CD4-positive, alpha-beta memory T cell (primary cell): ENCODE measurements at regions of chr10 and their contacts with region 1.

Region 1: GRCh38 chr10:73879296-73880173 is 5.2 kb upstream of the CAMK2G start:
- DNase-seq: peak; percentile 95 to 96 (median 96)
- H3K4me3 ChIP-seq: no peak overlapping the region
- H3K4me3 Mint-ChIP-seq: peak overlapping the region in 2 of 8 donors; percentile 12 to 52
- H3K27ac ChIP-seq: peak overlapping the region; percentile 50
- H3K27ac Mint-ChIP-seq: peak overlapping the region; percentile 56 to 99 (median 95)
- H3K4me1 ChIP-seq: peaks cover 37% of the 10 kb centered on the region
- H3K4me1 Mint-ChIP-seq: peaks cover 17 to 47% (median 31%) of the 10 kb centered on the region in 4 donors
- H3K27me3 ChIP-seq: no peaks in the 10 kb centered on the region
- H3K27me3 Mint-ChIP-seq: no peaks in the 10 kb centered on the region

Region 2: DNA sequence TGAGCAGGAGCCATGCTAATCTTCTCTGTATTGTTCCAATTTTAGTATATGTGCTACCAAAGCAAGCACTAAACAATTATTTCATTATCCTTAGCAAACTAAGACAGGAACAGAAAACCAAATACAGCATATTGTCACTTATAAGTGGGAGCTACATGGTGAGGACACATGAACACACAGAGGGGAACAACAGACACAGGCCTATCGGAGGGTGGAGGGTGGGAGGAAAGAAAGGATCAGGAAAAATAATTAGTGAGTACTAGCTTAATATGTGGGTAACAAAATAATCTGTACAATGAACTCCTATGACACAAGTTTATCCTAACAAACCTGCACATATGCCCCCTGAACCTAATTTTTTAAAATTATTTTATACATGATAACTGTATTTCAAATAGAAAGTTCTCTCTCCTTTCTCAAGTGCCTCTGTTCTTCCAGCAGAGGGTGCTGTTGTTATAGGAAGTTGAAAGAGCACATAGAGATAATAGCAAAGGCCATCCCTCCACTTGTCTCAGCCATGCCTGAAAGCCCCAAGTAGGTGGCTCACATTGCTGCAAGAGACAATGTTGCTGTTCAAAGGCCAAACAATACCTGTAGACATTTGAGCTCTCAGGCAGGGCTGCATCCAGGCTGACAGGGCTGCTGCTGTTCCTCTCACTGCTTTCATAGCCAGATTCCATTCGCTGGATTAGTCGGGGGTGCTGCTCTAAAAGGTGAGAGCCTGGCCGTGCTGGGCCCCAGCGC is 350.3 kb before region 1 on chr10:
- CTCF ChIA-PET with region 1: interaction called, 4 read pairs
- POLR2A ChIA-PET with region 1: no interaction called
- intact Hi-C with region 1: loop called (anchors 1 kb)
- DNase-seq: peak; percentile 57 to 77 (median 72)
- H3K4me3 ChIP-seq: no peak overlapping the region
- H3K4me3 Mint-ChIP-seq: no peak overlapping the region
- H3K27ac ChIP-seq: no peak overlapping the region
- H3K27ac Mint-ChIP-seq: no peak overlapping the region
- H3K4me1 ChIP-seq: no peaks in the 10 kb centered on the region
- H3K4me1 Mint-ChIP-seq: no peaks in the 10 kb centered on the region
- H3K27me3 ChIP-seq: no peaks in the 10 kb centered on the region
- H3K27me3 Mint-ChIP-seq: no peaks in the 10 kb centered on the region

Region 3: GRCh38 chr10:73798927-73799563 is 80.5 kb before region 1 on chr10:
- CTCF ChIA-PET with region 1: no interaction called
- POLR2A ChIA-PET with region 1: no interaction called
- intact Hi-C with region 1: no loop called
- DNase-seq: no peak
- H3K4me3 ChIP-seq: no peak overlapping the region
- H3K4me3 Mint-ChIP-seq: no peak overlapping the region
- H3K27ac ChIP-seq: no peak overlapping the region
- H3K27ac Mint-ChIP-seq: peak overlapping the region in 2 of 7 donors; percentile 46 to 63
- H3K4me1 ChIP-seq: no peaks in the 10 kb centered on the region
- H3K4me1 Mint-ChIP-seq: peaks cover 0 to 7% (median 0%) of the 10 kb centered on the region in 4 donors
- H3K27me3 ChIP-seq: no peaks in the 10 kb centered on the region
- H3K27me3 Mint-ChIP-seq: no peaks in the 10 kb centered on the region

Region 4: DNA sequence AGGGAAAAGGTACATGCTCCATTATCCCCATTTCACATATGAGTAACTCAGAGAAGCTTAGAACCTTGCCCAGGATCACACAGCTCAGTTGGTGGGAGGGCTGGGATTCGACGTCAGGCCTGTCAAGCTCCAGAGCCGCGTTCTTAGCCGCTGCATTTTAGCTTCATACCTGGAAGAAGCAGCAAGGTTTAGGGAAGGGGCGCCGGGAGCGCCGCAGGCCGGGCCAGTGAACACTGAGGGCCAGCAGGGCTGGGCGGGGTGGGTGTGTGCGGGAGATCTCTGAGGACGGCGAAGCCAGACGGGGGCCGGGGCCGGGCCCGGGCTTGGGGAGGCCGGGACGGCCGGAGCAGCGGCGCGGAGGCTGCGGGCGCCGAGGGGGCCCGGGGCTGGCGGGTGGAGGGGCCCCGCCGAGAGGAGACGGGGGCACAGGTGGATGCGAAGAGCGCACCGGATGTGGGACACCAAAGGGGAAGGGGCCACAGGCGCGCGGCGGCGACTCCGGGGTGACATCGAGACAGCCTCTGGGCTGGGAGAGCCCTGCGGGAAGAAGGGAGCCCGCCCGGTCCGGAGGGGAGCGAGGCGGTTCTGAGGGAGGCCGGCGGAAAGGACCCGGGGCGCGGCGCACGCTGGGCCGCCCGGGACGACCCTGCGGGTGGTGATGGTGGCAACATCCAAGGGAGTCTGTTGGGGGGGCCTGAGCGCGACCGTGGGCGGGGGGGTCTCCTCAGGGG is 68.6 kb before region 1 on chr10:
- CTCF ChIA-PET with region 1: interaction called, 10 read pairs
- POLR2A ChIA-PET with region 1: interaction called, 13 read pairs
- intact Hi-C with region 1: loop called (anchors 1 kb)
- DNase-seq: peak; percentile 64 to 71 (median 69)
- H3K4me3 ChIP-seq: peak overlapping the region; percentile 77 to 81
- H3K4me3 Mint-ChIP-seq: peak overlapping the region; percentile 89 to 95 (median 91)
- H3K27ac ChIP-seq: peak overlapping the region; percentile 88
- H3K27ac Mint-ChIP-seq: peak overlapping the region; percentile 84 to 98 (median 95)
- H3K4me1 ChIP-seq: peaks cover 51% of the 10 kb centered on the region
- H3K4me1 Mint-ChIP-seq: peaks cover 29 to 49% (median 40%) of the 10 kb centered on the region in 4 donors
- H3K27me3 ChIP-seq: no peaks in the 10 kb centered on the region
- H3K27me3 Mint-ChIP-seq: no peaks in the 10 kb centered on the region

Region 5: GRCh38 chr10:73848821-73849489 is 30.6 kb before region 1 on chr10:
- CTCF ChIA-PET with region 1: interaction called, 612 read pairs
- POLR2A ChIA-PET with region 1: interaction called, 57 read pairs
- intact Hi-C with region 1: loop called (anchors 1 kb)
- DNase-seq: peak; percentile 87 to 92 (median 89)
- H3K4me3 ChIP-seq: no peak overlapping the region
- H3K4me3 Mint-ChIP-seq: peak overlapping the region in 5 of 8 donors; percentile 26 to 59 (median 27)
- H3K27ac ChIP-seq: peak overlapping the region; percentile 46
- H3K27ac Mint-ChIP-seq: peak overlapping the region; percentile 83 to 96 (median 94)
- H3K4me1 ChIP-seq: peaks cover 8% of the 10 kb centered on the region
- H3K4me1 Mint-ChIP-seq: peaks cover 14 to 28% (median 16%) of the 10 kb centered on the region in 4 donors
- H3K27me3 ChIP-seq: no peaks in the 10 kb centered on the region
- H3K27me3 Mint-ChIP-seq: no peaks in the 10 kb centered on the region

Region 6: DNA sequence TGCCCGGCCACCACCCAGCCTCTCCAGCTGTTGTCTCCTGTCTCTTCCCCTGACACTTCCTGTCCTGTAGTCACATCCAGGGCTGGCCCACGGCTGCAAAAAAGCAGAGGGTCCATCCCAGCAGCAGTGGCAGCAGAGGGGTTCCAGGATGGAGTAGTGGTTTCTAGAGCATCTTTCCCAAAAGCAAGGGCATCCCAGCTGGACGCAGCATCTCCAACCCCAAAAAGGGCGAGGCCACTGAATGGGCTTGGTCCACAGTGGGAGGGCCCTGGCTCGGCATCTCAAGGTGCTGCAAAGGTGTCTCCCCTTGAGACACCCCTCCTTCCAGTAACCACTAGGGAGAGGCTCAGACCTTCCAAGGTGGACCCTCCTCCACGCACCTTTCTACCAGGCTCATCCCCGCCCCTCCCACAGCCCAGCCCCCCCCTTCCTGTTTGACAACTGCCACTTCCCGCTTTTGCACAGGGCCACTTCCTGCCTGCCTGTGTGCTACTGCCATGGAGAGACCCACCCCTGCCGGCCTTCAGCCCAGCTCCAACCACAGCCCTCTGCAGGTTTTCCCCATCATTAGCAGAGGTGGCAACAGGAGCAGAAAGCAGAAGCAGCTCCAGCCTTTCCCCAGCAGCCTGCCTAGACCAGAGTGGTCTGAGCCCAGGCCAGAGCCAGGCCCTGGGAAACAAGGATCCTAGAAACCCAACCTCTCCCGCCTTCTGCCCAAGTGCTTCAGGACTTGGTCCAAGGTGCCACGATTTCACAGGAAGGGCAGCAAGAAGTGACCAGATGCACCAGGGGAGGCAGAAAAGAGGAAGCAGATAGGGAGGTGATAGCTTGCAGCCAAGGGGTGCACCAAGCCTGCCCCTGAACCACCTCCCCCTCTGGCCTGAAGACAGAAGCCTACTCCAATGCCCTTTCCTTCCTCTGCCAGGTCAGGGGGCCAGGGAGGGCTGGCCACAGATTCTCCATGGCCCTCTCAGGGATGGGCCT is 13.8 kb before region 1 on chr10:
- CTCF ChIA-PET with region 1: interaction called, 199 read pairs
- POLR2A ChIA-PET with region 1: interaction called, 59 read pairs
- intact Hi-C with region 1: loop called (anchors 1 kb)
- DNase-seq: peak; percentile 31 to 61 (median 44)
- H3K4me3 ChIP-seq: peak overlapping the region; percentile 56 to 65
- H3K4me3 Mint-ChIP-seq: peak overlapping the region; percentile 84 to 93 (median 86)
- H3K27ac ChIP-seq: peak overlapping the region; percentile 64
- H3K27ac Mint-ChIP-seq: peak overlapping the region; percentile 88 to 98 (median 94)
- H3K4me1 ChIP-seq: peaks cover 87% of the 10 kb centered on the region
- H3K4me1 Mint-ChIP-seq: peaks cover 47 to 97% (median 81%) of the 10 kb centered on the region in 4 donors
- H3K27me3 ChIP-seq: no peaks in the 10 kb centered on the region
- H3K27me3 Mint-ChIP-seq: no peaks in the 10 kb centered on the region

Region 7: DNA sequence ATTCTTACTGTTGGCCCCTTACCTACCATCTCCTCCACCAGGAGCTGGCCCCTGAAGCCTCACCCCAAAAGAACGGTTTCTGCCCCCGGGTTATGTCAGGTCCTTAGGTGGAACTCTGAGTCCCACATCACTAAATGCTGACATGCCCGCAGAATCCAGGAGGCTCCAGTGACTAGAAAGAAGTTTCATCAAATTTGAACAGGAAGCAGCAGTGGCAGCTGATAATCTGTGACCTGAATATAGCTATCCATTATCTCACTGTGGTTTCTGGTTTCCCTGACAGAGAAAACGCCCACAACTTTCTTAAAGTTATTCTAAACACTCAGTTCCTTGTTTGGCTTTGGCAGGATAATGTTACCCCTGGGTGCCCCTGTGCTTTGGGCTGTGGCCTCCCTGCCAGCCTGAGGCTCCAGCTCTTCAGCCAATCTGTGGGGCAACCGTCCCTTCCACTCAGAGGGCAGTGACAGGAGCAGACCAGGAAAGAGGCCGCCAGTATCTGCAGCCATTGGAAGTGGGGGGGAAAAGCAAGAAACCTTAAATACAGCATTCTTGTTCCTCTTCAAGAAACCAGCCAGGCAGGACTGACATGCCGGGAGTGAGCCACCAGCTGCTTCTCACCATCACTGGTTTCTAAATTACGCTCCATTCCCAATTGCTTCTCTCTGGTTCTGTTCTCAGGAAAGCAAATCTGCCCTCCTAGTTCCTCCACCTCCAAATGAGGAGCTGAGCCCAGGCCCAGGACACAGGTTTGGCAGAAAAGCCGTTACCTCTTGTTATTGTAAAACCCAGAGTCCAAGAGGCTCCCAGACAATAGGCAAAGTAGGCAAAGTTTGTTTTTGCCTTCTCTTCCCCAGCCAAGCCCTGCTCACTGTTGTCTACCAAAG is 77.2 kb after region 1 on chr10:
- CTCF ChIA-PET with region 1: interaction called, 16 read pairs
- POLR2A ChIA-PET with region 1: interaction called, 5 read pairs
- intact Hi-C with region 1: no loop called
- DNase-seq: peak; percentile 64 to 78 (median 72)
- H3K4me3 ChIP-seq: peak overlapping the region; percentile 4 to 30
- H3K4me3 Mint-ChIP-seq: peak overlapping the region; percentile 66 to 94 (median 86)
- H3K27ac ChIP-seq: peak overlapping the region; percentile 52
- H3K27ac Mint-ChIP-seq: peak overlapping the region; percentile 94 to 99 (median 97)
- H3K4me1 ChIP-seq: peaks cover 70% of the 10 kb centered on the region
- H3K4me1 Mint-ChIP-seq: peaks cover 43 to 64% (median 54%) of the 10 kb centered on the region in 4 donors
- H3K27me3 ChIP-seq: no peaks in the 10 kb centered on the region
- H3K27me3 Mint-ChIP-seq: no peaks in the 10 kb centered on the region

Region 8: DNA sequence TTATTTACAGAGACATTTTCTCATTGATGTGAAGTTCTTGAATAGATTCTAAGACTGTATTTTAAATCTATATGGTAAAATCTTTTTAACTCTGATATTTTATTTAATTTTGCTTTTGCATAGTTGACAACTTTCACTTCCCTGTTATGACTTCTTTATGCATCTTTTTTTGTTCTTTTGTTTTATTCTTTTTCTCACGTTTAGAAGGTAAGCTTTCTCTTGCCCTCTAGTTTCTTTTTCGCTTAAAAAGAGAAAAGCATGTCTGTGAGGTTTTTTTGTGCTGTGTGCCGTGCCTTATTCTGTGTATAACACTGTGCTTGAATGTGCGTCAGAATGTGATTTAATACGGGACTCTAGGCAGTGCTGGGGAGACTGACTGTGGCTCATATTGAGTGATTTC is 196.4 kb after region 1 on chr10:
- CTCF ChIA-PET with region 1: interaction called, 150 read pairs
- POLR2A ChIA-PET with region 1: no interaction called
- intact Hi-C with region 1: no loop called
- DNase-seq: no peak
- H3K4me3 ChIP-seq: no peak overlapping the region
- H3K4me3 Mint-ChIP-seq: no peak overlapping the region
- H3K27ac ChIP-seq: no peak overlapping the region
- H3K27ac Mint-ChIP-seq: no peak overlapping the region
- H3K4me1 ChIP-seq: peaks cover 17% of the 10 kb centered on the region
- H3K4me1 Mint-ChIP-seq: peaks cover 16 to 50% (median 31%) of the 10 kb centered on the region in 4 donors
- H3K27me3 ChIP-seq: no peaks in the 10 kb centered on the region
- H3K27me3 Mint-ChIP-seq: no peaks in the 10 kb centered on the region